Stomach (tissue), 19 donors: ENCODE measurements at regions of chr1 and their contacts with region 1.

Region 1: GRCh38 chr1:26035959-26036755 is 9.8 kb downstream of the SLC30A2 start:
- DNase-seq: peak; percentile 85 to 94
- H3K4me3 ChIP-seq: peak overlapping the region; percentile 62 to 93 (median 87)
- H3K27ac ChIP-seq: peak overlapping the region; percentile 78 to 92 (median 86)
- H3K4me1 ChIP-seq: peaks cover 16 to 21% (median 20%) of the 10 kb centered on the region in 4 donors
- H3K27me3 ChIP-seq: peaks cover 0 to 19% (median 5%) of the 10 kb centered on the region in 3 donors
- CTCF ChIP-seq: peak in 6 of 7 experiments; percentile 99 to 100 (median 100)
- EP300 ChIP-seq: no peak
- POLR2A ChIP-seq: no peak

Region 2: DNA sequence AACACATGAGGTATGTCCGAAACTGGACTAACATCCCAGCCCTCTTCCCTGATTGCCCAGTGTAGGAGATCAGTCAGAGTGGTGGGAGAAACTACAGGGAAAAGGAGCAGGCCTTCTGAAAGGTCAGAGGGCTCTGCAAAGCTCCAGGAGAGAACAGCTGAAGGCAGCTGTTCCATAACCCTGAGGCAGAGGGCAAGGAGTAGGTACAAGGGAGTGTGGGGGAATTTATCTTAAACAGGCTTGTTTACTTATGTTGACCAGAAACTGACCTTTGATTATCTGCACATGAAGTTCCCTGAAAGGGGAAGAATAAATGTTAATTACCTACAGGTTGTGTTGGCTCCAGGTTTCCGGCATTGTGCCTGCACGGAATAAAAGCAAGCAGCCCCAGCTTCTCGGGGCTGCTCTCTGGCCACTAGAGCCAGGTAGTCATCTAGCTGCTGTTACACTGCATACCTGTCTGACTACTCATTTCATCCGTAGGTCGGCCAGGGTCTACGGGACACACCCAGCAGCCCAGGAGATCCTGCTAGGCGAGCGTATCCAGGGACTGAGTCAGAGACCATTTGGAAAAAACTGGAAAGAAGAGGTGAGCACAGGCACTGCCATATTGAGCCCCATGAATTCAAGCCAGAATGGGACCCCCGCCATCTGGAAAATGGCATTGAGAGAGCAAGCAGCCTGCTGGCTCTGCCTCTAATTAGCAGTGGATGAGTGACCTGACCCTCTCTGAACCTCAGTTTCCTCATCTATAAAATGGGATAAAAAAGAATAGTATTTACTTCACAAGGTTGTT is 145.7 kb before region 1 on chr1:
- intact Hi-C with region 1: no loop called
- DNase-seq: peak; percentile 82 to 91
- H3K4me3 ChIP-seq: no peak overlapping the region
- H3K27ac ChIP-seq: peak overlapping the region; percentile 78 to 85 (median 81)
- H3K4me1 ChIP-seq: peaks cover 42 to 55% (median 50%) of the 10 kb centered on the region in 4 donors
- H3K27me3 ChIP-seq: no peaks in the 10 kb centered on the region
- CTCF ChIP-seq: no peak
- EP300 ChIP-seq: no peak
- POLR2A ChIP-seq: no peak

Region 3: GRCh38 chr1:26161415-26162219 is 125.5 kb after region 1 on chr1:
- intact Hi-C with region 1: loop called (anchors 5 kb)
- DNase-seq: peak; percentile 55 to 84
- H3K4me3 ChIP-seq: peak overlapping the region; percentile 53 to 66 (median 55)
- H3K27ac ChIP-seq: peak overlapping the region in 4 of 5 donors; percentile 23 to 70 (median 41)
- H3K4me1 ChIP-seq: peaks cover 15 to 48% (median 38%) of the 10 kb centered on the region in 4 donors
- H3K27me3 ChIP-seq: peaks cover 0 to 62% (median 26%) of the 10 kb centered on the region in 3 donors
- CTCF ChIP-seq: peak in 1 of 7 experiments; percentile 20
- EP300 ChIP-seq: no peak
- POLR2A ChIP-seq: no peak

Region 4: GRCh38 chr1:26784023-26784871 is 748.1 kb after region 1 on chr1:
- intact Hi-C with region 1: no loop called
- DNase-seq: peak; percentile 84 to 91
- H3K4me3 ChIP-seq: no peak overlapping the region
- H3K27ac ChIP-seq: peak overlapping the region; percentile 77 to 100 (median 98)
- H3K4me1 ChIP-seq: peaks cover 63 to 87% (median 70%) of the 10 kb centered on the region in 4 donors
- H3K27me3 ChIP-seq: no peaks in the 10 kb centered on the region
- CTCF ChIP-seq: no peak
- EP300 ChIP-seq: no peak
- POLR2A ChIP-seq: no peak